Activated naive CD8-positive, alpha-beta T cell treated with anti-CD3 and anti-CD28 coated beads, Interleukin-2, amount 10 ng/mL, durations not matched to agents 7 days and 5 days (primary cell): ENCODE measurements at regions of chr9 and their contacts with region 1.

Region 1: DNA sequence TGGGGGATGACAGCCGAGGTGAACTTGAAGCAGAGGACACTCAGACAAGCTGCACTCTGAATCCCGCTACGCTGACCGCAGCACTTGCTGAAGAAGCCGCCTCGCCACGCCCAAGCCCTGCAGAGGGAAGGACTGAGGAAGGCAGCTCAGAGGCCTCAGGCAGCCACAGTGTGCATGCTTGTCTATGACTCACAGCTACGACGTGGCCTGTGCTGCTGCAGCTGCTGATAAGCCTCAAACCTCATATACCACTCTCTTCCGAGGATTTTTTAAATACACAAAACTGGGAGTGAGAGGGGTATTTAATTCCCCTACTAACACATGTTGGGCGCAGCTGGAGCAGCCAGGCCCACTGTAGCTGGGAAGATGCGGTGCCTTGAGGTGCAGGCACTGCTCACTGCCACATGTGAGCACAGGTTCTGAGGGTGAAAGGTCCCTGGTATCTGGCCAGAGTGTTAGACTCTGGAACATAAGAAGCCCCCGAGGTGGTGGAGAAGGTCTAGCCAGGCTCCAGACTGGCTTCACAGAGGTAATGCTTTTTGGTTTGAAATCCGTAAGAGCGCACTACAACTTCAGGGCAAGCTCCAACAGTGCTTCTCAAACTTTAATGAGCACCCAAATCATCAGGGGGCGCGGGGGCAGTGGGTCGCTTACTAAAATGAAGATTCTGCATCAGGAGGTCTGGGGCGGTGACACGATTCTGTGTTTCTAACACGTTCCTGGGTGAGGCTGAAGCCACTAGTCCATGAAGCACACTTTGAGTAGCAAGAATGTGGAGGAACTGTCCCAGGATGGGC is 196.8 kb downstream of the AUH start:
- DNase-seq: peak; percentile 79
- ATAC-seq: peak; percentile 86
- H3K4me3 Mint-ChIP-seq: peak overlapping the region; percentile 74
- H3K27ac Mint-ChIP-seq: peak overlapping the region; percentile 90
- H3K4me1 Mint-ChIP-seq: peaks cover 51% of the 10 kb centered on the region
- H3K27me3 Mint-ChIP-seq: no peaks in the 10 kb centered on the region

Region 2: GRCh38 chr9:91131433-91131839 is 33.5 kb before region 1 on chr9:
- POLR2A ChIA-PET with region 1: interaction called, 19 read pairs
- DNase-seq: peak; percentile 71
- ATAC-seq: peak; percentile 100
- H3K4me3 Mint-ChIP-seq: peak overlapping the region; percentile 72
- H3K27ac Mint-ChIP-seq: peak overlapping the region; percentile 98
- H3K4me1 Mint-ChIP-seq: peaks cover 26% of the 10 kb centered on the region
- H3K27me3 Mint-ChIP-seq: no peaks in the 10 kb centered on the region

Region 3: GRCh38 chr9:91150998-91151717 is 13.8 kb before region 1 on chr9:
- POLR2A ChIA-PET with region 1: interaction called, 56 read pairs
- DNase-seq: no peak
- ATAC-seq: peak; percentile 89
- H3K4me3 Mint-ChIP-seq: peak overlapping the region; percentile 53
- H3K27ac Mint-ChIP-seq: peak overlapping the region; percentile 88
- H3K4me1 Mint-ChIP-seq: peaks cover 70% of the 10 kb centered on the region
- H3K27me3 Mint-ChIP-seq: no peaks in the 10 kb centered on the region

Region 4: DNA sequence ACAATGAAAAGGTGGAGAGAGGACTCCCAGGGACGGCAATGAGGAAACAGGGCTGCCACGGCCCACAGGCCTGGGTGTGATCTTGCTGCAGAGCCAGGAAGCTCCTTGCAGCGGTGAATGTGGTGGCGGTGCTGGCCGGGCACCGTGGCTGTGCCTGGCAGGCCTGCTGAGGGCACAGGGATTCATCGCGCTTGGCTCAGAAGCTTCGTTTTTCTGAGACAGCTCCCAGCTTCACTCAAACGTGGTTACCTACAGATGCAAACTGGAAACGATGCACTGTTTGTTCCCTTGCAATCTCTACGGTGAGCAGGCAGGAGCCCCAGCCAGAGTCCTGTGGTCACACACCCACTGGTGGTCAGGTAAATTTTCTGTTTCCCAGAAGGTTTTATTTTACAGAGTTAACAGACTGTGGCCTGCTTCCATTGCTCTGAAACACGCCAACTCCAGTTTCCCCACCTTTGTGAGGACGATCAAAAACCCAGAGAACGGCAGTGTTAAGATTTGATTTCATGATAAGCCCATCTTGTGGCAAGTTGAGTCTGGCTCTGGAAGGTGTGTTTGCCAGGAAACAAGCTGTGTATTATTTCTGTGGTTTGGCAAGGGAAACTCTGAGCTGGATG is 12.8 kb after region 1 on chr9:
- POLR2A ChIA-PET with region 1: interaction called, 19 read pairs
- DNase-seq: peak; percentile 61
- ATAC-seq: peak; percentile 72
- H3K4me3 Mint-ChIP-seq: peak overlapping the region; percentile 61
- H3K27ac Mint-ChIP-seq: peak overlapping the region; percentile 90
- H3K4me1 Mint-ChIP-seq: peaks cover 35% of the 10 kb centered on the region
- H3K27me3 Mint-ChIP-seq: no peaks in the 10 kb centered on the region

Region 5: DNA sequence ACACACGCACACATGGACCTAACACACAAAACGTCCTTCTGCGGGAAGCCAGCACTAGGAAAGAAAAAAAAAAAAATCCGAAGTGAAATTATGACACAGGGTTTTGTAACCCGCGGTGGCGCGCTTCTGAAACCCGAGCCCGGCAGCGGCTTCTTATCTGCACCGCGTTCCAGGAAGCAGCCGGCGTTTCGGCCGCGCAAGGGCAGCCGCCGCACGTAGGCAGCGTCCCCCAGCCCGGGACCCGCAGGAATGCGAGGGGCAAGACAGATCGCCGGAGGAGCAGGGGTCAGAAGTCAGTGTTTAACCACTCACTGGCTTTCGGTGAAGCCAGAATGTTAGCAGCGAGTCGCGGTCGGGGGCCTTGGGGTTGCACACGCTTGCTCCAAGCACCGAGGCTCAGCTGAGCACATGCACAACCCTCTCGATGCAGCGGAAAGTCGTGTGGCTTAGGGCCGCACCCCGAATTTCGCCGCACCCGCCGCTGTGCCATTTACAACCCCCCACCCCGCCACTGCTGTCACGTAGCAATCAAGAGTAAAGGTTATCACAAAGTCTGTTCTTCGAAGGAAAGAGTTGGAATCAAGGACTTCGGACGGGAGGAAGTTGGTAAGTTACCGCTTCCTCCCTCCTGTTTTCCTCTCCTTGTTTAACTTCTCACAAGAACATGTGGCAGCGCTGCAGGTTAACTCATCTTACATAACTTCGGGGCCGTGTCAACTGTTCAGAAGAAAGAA is 28.9 kb after region 1 on chr9:
- POLR2A ChIA-PET with region 1: interaction called, 10 read pairs
- DNase-seq: peak; percentile 88
- ATAC-seq: peak; percentile 79
- H3K4me3 Mint-ChIP-seq: peak overlapping the region; percentile 79
- H3K27ac Mint-ChIP-seq: peak overlapping the region; percentile 99
- H3K4me1 Mint-ChIP-seq: peaks cover 50% of the 10 kb centered on the region
- H3K27me3 Mint-ChIP-seq: no peaks in the 10 kb centered on the region

Region 6: DNA sequence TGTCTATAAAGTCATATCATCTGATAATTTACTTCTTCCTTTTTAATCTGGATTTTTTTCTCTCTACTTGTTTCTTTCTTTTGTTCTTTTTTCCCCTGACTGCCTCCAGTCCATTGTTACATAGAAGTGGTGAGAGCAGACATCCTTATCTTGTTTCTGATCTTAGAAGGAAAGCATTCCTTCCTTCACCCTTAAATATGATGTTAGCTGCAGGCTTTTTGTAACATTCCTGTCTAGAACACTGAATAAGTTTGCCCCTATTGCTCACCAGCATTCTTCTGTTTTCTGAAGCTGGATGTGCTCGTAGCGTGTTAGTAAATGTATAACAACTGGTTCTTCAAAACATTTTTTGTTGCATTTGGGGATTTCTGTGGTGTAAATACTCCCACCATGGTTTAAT is 395.4 kb after region 1 on chr9:
- POLR2A ChIA-PET with region 1: no interaction called
- DNase-seq: no peak
- ATAC-seq: no peak
- H3K4me3 Mint-ChIP-seq: no peak overlapping the region
- H3K27ac Mint-ChIP-seq: no peak overlapping the region
- H3K4me1 Mint-ChIP-seq: no peaks in the 10 kb centered on the region
- H3K27me3 Mint-ChIP-seq: peaks cover 46% of the 10 kb centered on the region